Heart right ventricle (tissue), 16 donors: ENCODE measurements at regions of chr18 and their contacts with region 1.

Region 1: DNA sequence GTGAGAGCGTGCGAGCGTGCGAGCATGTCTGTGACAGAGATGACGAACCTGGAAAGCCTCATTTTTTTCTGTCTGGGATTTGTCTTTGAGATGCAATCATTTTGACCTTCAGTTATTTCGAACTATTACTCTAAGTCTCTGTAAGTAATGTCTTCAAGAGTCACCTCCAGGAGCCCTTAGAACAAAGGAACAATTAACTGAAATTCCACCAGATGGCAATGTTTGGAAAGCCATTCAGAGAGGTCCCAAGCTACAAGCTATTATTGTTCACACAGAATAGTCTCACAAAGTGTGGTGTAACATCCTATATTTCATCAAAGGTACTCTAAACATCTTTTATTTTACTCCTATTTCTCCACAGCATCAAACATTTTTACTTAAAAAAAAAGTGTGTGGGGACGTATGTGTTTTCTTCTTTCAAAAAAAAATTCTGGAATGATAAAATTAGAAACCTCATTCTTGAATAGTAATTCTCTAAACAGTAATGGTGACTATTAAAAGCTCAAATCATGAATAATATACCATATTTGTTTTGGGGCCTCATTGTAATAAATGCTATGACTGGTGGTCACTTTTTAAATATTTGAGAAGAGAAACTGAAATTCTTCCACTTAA is 35.1 kb upstream of the MAPRE2 start:
- DNase-seq: peak in 1 of 2 donors; percentile 28
- ATAC-seq: peak; percentile 80 to 92 (median 88)
- H3K4me3 ChIP-seq: no peak overlapping the region
- H3K27ac ChIP-seq: no peak overlapping the region
- H3K4me1 ChIP-seq: peaks cover 0 to 6% (median 0%) of the 10 kb centered on the region in 9 donors
- H3K27me3 ChIP-seq: no peaks in the 10 kb centered on the region
- CTCF ChIP-seq: peak; percentile 45 to 86 (median 75)

Region 2: DNA sequence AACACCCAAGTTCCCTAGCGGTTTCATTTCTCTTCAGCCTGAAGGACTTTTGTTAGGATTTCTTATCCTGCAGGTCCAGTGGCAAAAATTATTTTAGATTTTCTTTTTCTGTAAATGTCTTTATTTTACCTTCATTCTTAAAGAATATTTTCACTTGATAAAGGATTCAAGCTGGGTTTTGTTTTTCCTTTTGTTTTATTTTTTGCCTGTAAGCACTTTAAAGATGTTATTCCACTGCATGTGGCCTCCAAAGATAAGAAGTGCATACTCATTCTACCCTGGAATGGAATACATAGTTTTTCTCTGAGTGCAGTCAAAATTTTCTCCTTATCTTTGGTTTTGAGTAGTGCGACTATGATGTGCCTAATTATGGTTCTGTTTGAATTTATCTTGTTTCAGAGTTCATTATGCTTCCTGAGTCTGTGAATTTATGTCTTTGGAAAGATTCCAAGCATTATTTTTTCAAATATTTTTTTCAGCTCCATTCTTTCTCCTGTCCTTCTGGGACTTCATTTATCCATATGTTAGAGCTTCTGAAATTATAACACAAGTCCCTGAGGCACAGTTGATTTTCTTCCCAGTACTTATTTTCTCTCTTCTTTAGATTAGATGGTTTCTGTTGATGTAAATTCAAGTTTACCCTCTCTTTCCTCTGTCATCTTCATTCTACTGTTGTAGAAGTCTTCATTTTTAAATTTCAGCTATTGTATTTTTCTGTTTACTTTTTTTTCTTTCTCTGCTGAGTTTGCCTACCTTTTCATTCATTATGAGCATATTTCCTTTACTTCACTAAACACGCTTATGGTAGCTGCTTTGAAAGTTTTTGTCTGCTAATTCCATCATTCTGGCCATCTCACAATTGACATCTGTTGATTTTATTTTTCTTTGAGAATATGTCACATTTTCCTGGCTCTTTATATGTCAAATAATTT is 104.8 kb after region 1 on chr18:
- intact Hi-C with region 1: no loop called
- DNase-seq: no peak
- ATAC-seq: peak in 3 of 8 donors; percentile 36 to 42 (median 37)
- H3K4me3 ChIP-seq: no peak overlapping the region
- H3K27ac ChIP-seq: peak overlapping the region in 8 of 10 donors; percentile 6 to 69 (median 50)
- H3K4me1 ChIP-seq: peaks cover 0 to 30% (median 20%) of the 10 kb centered on the region in 9 donors
- H3K27me3 ChIP-seq: no peaks in the 10 kb centered on the region
- CTCF ChIP-seq: no peak

Region 3: GRCh38 chr18:35231052-35231451 is 225.0 kb after region 1 on chr18:
- intact Hi-C with region 1: loop called in 5 of 10 experiments (anchors 5 to 10 kb)
- DNase-seq: peak; percentile 68 to 88
- ATAC-seq: peak; percentile 80 to 95 (median 90)
- H3K4me3 ChIP-seq: peak overlapping the region in 4 of 10 donors; percentile 18 to 33 (median 20)
- H3K27ac ChIP-seq: no peak overlapping the region
- H3K4me1 ChIP-seq: peaks cover 0 to 3% (median 0%) of the 10 kb centered on the region in 9 donors
- H3K27me3 ChIP-seq: no peaks in the 10 kb centered on the region
- CTCF ChIP-seq: peak; percentile 84 to 98 (median 94)

Region 4: GRCh38 chr18:35240664-35241447 is 234.8 kb after region 1 on chr18 and contains the start of gene ZNF397:
- intact Hi-C with region 1: loop called in 2 of 10 experiments (anchors 10 kb)
- DNase-seq: peak; percentile 98 to 99
- ATAC-seq: peak; percentile 100
- H3K4me3 ChIP-seq: peak within 1 kb of the TSS; percentile 54 to 92 (median 74)
- H3K27ac ChIP-seq: peak within 1 kb of the TSS; percentile 93 to 99 (median 98)
- H3K4me1 ChIP-seq: peaks cover 0 to 21% (median 13%) of the 10 kb centered on the region in 9 donors
- H3K27me3 ChIP-seq: no peaks in the 10 kb centered on the region
- CTCF ChIP-seq: peak in 2 of 9 donors; percentile 4 to 19
- total RNA-seq, gene ZNF397: 12.7 to 18.6 (median 14.6) TPM

Region 5: DNA sequence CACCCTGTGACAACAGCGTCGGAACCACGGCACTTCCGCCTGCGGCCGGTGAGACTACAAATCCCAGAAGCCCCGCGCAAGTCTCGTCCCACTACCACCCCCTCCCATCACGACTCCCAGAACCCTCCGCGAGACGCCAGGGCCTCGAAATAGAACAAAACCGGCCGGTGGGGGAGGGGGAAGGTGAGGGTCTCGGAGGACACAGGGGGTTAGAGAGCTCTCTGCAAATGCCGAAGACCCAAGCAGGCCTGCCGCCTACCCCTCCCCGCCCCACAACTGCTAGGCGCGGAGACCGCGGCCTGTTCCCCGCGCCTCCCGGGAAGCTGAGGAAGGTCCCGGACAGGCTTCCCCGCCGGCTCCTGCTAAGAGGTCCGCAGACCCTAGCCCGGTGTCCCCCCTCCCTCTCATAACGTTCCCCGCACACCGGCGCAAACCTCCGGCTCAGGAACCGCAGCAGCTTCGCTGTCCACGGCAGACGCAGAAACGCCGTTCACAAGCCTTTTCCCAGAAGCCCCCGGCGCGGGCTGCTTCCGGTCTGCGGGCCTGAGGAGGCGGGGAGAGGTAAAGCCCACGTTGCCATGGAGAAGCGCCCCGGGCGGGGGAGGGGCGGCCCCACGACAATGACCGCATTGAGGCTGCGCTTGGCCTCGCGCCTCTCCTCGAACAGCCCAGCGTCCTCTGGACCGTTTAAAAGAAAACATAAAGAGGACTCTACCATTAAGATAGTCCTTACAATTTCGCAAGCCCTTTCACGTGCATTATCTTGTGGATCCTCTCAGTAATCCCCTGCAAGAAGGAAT is 338.1 kb after region 1 on chr18 and contains the start of gene ZNF24:
- intact Hi-C with region 1: loop called in 2 of 10 experiments (anchors 10 kb)
- DNase-seq: peak; percentile 96 to 97
- ATAC-seq: peak; percentile 98 to 99 (median 98)
- H3K4me3 ChIP-seq: peak within 1 kb of the TSS; percentile 82 to 99 (median 90)
- H3K27ac ChIP-seq: peak within 1 kb of the TSS; percentile 97 to 100 (median 99)
- H3K4me1 ChIP-seq: peaks cover 0 to 54% (median 49%) of the 10 kb centered on the region in 9 donors
- H3K27me3 ChIP-seq: no peaks in the 10 kb centered on the region
- CTCF ChIP-seq: no peak
- total RNA-seq, gene ZNF24: 41.1 to 55.1 (median 47.8) TPM

Region 6: DNA sequence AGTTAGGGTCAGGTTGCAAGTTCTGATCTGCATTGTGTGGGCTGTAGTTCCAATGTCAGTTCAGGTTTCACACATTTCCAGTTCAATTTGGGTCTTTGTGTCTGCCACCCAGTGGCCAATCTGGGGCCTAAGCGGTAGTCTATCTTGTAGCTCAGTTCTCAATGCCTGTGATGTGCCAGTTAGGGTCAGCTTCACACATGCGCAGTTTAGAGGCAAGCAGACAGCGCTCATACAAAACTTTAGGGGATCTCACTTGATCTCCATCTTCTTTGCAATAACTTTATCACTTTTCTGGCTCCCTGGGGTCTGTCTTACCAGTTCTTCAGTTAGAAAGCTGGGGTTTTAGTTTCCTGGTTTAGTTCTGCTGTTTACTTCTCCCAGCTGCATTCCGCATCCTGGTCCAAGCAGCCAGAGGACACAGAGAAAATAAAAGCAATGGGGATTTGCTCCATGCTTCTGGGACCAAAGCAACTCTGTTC is 349.1 kb after region 1 on chr18:
- intact Hi-C with region 1: loop called in 5 of 10 experiments (anchors 5 to 10 kb)
- DNase-seq: peak; percentile 54 to 75
- ATAC-seq: peak; percentile 87 to 99 (median 96)
- H3K4me3 ChIP-seq: peak overlapping the region in 4 of 10 donors; percentile 11 to 32 (median 30)
- H3K27ac ChIP-seq: no peak overlapping the region
- H3K4me1 ChIP-seq: peaks cover 0 to 8% (median 0%) of the 10 kb centered on the region in 9 donors
- H3K27me3 ChIP-seq: no peaks in the 10 kb centered on the region
- CTCF ChIP-seq: peak; percentile 51 to 85 (median 78)

Region 7: GRCh38 chr18:35369126-35369525 is 363.1 kb after region 1 on chr18:
- intact Hi-C with region 1: loop called in 2 of 10 experiments (anchors 10 kb)
- DNase-seq: no peak
- ATAC-seq: no peak
- H3K4me3 ChIP-seq: no peak overlapping the region
- H3K27ac ChIP-seq: no peak overlapping the region
- H3K4me1 ChIP-seq: no peaks in the 10 kb centered on the region
- H3K27me3 ChIP-seq: no peaks in the 10 kb centered on the region
- CTCF ChIP-seq: no peak